ENCODE measurements at regions of chr18 and their contacts with region 1.

Region 1: GRCh38 chr18:50429207-50429948 is 54.5 kb downstream of the SKA1 start:
- DNase-seq: peak; percentile 14 to 45 (median 19)
- ATAC-seq: 0 out of 3 replicates have a peak, but pooled peaks have one; percentile 19
- H3K4me3 ChIP-seq: no peak overlapping the region
- H3K27ac ChIP-seq: no peak overlapping the region
- H3K4me1 ChIP-seq: peaks cover 0 to 16% of the 10 kb centered on the region in 2 experiments; a peak in 3 of 5 replicates
- H3K27me3 ChIP-seq: no peaks in the 10 kb centered on the region; a peak in 1 of 5 replicates
- CTCF ChIP-seq: peak; percentile 11 to 50 (median 41); a peak in 5 of 6 replicates
- EP300 ChIP-seq: no peak
- POLR2A ChIP-seq: no peak
- RAD21 ChIP-seq: peak; percentile 27 to 44; a peak in 1 of 4 replicates

Region 2: DNA sequence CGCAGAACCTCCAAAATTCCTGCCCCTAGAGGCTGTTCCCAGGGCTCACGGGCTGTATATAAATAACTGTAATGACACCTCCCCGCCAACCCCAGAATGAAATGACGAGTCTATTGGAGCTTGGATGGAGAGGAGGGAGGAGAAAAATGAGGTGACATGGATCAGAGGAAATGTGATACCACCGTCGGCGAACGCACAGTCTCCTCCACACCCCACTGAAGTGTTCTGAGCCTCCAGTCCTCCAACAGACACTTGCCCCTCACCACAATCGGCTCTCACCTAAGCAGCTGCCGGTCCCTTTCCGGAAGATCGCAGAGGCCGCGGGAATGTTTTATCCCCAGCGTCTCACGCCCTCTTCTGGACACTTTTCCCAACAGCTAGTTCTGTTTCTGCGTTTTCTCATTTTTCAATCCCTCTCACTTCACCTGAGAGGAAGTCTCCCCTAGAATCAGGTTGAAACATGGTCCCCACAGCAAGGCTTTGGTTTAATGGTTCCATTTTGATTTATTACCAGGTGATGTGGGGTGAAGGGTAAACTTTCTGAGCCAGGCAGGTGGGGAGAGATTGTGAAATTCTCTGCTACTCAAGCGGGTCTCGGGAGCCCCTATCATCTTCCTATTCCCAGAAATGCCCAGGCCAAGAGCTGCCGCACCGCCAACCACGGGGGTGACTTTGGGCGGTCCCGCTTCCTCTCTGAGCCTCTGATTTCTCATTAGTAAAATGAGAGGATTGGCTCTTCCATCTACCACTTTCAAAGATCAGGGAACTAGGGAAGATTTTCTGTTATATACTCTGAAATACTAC is 225.4 kb before region 1 on chr18:
- CTCF ChIA-PET with region 1: no interaction called
- POLR2A ChIA-PET with region 1: no interaction called
- in situ Hi-C with region 1: loop called (anchors 10 kb)
- intact Hi-C with region 1: no loop called
- DNase-seq: peak; percentile 9 to 60 (median 24)
- ATAC-seq: peak; percentile 84
- H3K4me3 ChIP-seq: no peak overlapping the region
- H3K27ac ChIP-seq: no peak overlapping the region
- H3K4me1 ChIP-seq: no peaks in the 10 kb centered on the region; a peak in 1 of 5 replicates
- H3K27me3 ChIP-seq: peaks cover 4 to 12% of the 10 kb centered on the region in 2 experiments; a peak in 3 of 5 replicates
- CTCF ChIP-seq: peak; percentile 53 to 64 (median 62)
- EP300 ChIP-seq: no peak
- POLR2A ChIP-seq: no peak
- RAD21 ChIP-seq: peak; percentile 28 to 65; a peak in 3 of 4 replicates

Region 3: GRCh38 chr18:50287441-50288347 is 141.7 kb before region 1 on chr18 and contains the start of gene CXXC1:
- CTCF ChIA-PET with region 1: no interaction called
- POLR2A ChIA-PET with region 1: interaction called, 3 read pairs
- in situ Hi-C with region 1: no loop called
- intact Hi-C with region 1: loop called (anchors 5 kb)
- DNase-seq: peak; percentile 81 to 97 (median 88)
- ATAC-seq: peak; percentile 95
- H3K4me3 ChIP-seq: peak within 1 kb of the TSS; percentile 84
- H3K27ac ChIP-seq: peak within 1 kb of the TSS; percentile 89
- H3K4me1 ChIP-seq: peaks cover 3 to 21% of the 10 kb centered on the region in 2 experiments; a peak in 3 of 5 replicates
- H3K27me3 ChIP-seq: no peaks in the 10 kb centered on the region
- CTCF ChIP-seq: peak; percentile 30 to 43 (median 39); a peak in 4 of 6 replicates
- EP300 ChIP-seq: 0 out of 2 replicates have a peak, but pooled peaks have one; percentile 4
- POLR2A ChIP-seq: peak; percentile 76
- RAD21 ChIP-seq: peak in 1 of 2 experiments; percentile 34; a peak in 3 of 4 replicates
- polyA plus RNA-seq, gene CXXC1: 3.4 to 7.4 TPM

Region 4: GRCh38 chr18:50374753-50375391 is 54.5 kb before region 1 on chr18 and contains the start of gene SKA1:
- CTCF ChIA-PET with region 1: no interaction called
- POLR2A ChIA-PET with region 1: no interaction called
- in situ Hi-C with region 1: no loop called
- intact Hi-C with region 1: loop called (anchors 1 kb)
- DNase-seq: peak; percentile 92 to 93 (median 93)
- ATAC-seq: peak; percentile 95
- H3K4me3 ChIP-seq: peak within 1 kb of the TSS; percentile 63
- H3K27ac ChIP-seq: peak within 1 kb of the TSS; percentile 90
- H3K4me1 ChIP-seq: peaks cover 9 to 16% of the 10 kb centered on the region in 2 experiments
- H3K27me3 ChIP-seq: no peaks in the 10 kb centered on the region
- CTCF ChIP-seq: no peak
- EP300 ChIP-seq: no peak
- POLR2A ChIP-seq: peak; percentile 83
- RAD21 ChIP-seq: no peak
- polyA plus RNA-seq, gene SKA1: 27.8 to 42.6 TPM